HAP-1 (cell line): ENCODE measurements at regions of chr1 and their contacts with region 1.

Region 1: GRCh38 chr1:180515864-180516388 is 13.5 kb upstream of the ACBD6 start:
- DNase-seq: peak; percentile 81 to 86
- H3K4me3 ChIP-seq: no peak overlapping the region
- H3K4me1 ChIP-seq: peaks cover 7% of the 10 kb centered on the region; the same call in 1 of the 2 replicates
- H3K27me3 ChIP-seq: no peaks in the 10 kb centered on the region

Region 2: GRCh38 chr1:180365039-180365438 is 150.9 kb before region 1 on chr1:
- in situ Hi-C with region 1: no loop called
- DNase-seq: peak in 1 of 2 experiments; percentile 14
- H3K4me3 ChIP-seq: no peak overlapping the region
- H3K4me1 ChIP-seq: 0 out of 2 replicates have a peak, but pooled peaks cover 5% of the 10 kb centered on the region
- H3K27me3 ChIP-seq: no peaks in the 10 kb centered on the region

Region 3: GRCh38 chr1:180451504-180451903 is 64.4 kb before region 1 on chr1:
- in situ Hi-C with region 1: no loop called
- DNase-seq: no peak
- H3K4me3 ChIP-seq: no peak overlapping the region
- H3K4me1 ChIP-seq: no peaks in the 10 kb centered on the region
- H3K27me3 ChIP-seq: no peaks in the 10 kb centered on the region

Region 4: GRCh38 chr1:181166377-181167196 is 650.7 kb after region 1 on chr1:
- in situ Hi-C with region 1: loop called (anchors 10 kb)
- DNase-seq: peak; percentile 75 to 81
- H3K4me3 ChIP-seq: no peak overlapping the region
- H3K4me1 ChIP-seq: no peaks in the 10 kb centered on the region
- H3K27me3 ChIP-seq: no peaks in the 10 kb centered on the region